Heart right ventricle (tissue), 16 donors: ENCODE measurements at regions of chr9 and their contacts with region 1.

Region 1: DNA sequence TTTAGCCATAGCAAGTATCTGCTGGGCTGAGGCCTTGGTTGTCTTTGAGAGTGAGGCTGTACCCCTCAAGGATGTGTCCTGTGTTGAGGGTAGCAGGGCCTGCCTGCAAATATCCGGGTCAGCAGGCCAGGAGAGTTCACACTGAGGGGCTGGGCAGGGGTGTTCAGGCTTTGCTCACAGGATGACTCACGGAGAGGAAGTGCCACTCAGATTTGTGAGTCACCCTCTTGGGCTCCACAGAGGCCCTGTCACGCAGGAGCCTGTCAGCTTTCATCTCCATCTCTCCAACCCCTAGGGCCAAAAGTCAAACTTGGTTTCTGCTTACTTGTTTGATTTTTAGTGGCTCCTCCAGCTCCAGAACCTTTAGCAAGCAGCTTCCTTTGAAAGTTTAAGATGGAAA is 211.5 kb downstream of the SEC61B start:
- DNase-seq: peak in 1 of 2 donors; percentile 14
- ATAC-seq: peak in 7 of 8 donors; percentile 43 to 97 (median 53)
- H3K4me3 ChIP-seq: no peak overlapping the region
- H3K27ac ChIP-seq: peak overlapping the region in 1 of 10 donors; percentile 39
- H3K4me1 ChIP-seq: peaks cover 0 to 16% (median 7%) of the 10 kb centered on the region in 9 donors
- H3K27me3 ChIP-seq: no peaks in the 10 kb centered on the region
- CTCF ChIP-seq: no peak

Region 2: GRCh38 chr9:98642661-98643312 is 790.8 kb before region 1 on chr9:
- intact Hi-C with region 1: no loop called
- DNase-seq: no peak
- ATAC-seq: no peak
- H3K4me3 ChIP-seq: no peak overlapping the region
- H3K27ac ChIP-seq: no peak overlapping the region
- H3K4me1 ChIP-seq: no peaks in the 10 kb centered on the region
- H3K27me3 ChIP-seq: peaks cover 0 to 22% (median 7%) of the 10 kb centered on the region in 7 donors
- CTCF ChIP-seq: no peak

Region 3: GRCh38 chr9:99253772-99254431 is 179.7 kb before region 1 on chr9:
- intact Hi-C with region 1: no loop called
- DNase-seq: no peak
- ATAC-seq: no peak
- H3K4me3 ChIP-seq: no peak overlapping the region
- H3K27ac ChIP-seq: peak overlapping the region in 1 of 10 donors; percentile 14
- H3K4me1 ChIP-seq: peaks cover 0 to 23% (median 7%) of the 10 kb centered on the region in 9 donors
- H3K27me3 ChIP-seq: no peaks in the 10 kb centered on the region
- CTCF ChIP-seq: no peak

Region 4: GRCh38 chr9:99377790-99378775 is 55.5 kb before region 1 on chr9:
- intact Hi-C with region 1: loop called in 1 of 10 experiments (anchors 10 kb)
- DNase-seq: no peak
- ATAC-seq: no peak
- H3K4me3 ChIP-seq: no peak overlapping the region
- H3K27ac ChIP-seq: no peak overlapping the region
- H3K4me1 ChIP-seq: no peaks in the 10 kb centered on the region
- H3K27me3 ChIP-seq: peaks cover 0 to 2% (median 0%) of the 10 kb centered on the region in 7 donors
- CTCF ChIP-seq: no peak

Region 5: DNA sequence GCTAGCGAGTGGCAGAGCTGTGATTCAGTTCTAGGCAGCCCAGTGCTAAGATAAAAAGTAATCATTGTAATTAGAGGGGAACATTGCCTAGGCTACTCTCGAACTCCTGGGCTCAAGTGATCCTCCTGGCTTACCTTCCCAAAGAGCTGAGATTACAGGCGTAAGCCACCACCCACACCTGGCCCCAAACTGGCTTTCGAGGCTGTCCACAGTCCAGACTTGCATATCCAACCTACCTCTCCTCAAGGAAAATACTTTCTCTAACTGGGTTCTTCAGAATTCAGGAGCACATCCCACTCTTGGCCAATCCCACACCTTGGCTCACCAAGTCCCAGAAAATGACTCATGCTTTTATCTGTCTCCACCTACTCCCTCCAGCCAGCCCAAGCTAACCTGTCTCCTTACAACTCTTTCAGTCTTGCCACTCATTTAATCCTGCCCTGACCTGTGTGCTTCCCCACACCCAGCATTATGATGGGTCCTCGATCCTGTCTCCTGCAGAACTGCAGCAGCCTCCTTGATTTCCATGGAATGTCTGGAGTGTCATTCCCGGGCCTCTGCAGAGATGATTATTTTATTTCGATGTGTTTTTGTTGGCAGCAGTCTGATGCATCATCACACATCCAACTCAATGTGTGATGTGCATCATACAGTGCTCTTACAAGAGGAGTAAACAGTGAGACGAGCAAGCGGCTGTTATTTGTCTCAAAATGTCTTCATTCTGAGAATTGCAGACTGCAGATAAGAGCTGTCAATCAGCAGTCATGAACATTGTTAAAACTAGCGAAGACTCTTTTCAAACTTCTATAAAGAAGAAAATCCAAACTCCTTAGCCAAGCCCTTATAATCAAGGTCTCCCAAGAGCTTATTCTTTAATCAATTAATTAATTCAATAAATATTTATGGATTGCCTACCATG is 44.2 kb before region 1 on chr9:
- intact Hi-C with region 1: no loop called
- DNase-seq: no peak
- ATAC-seq: no peak
- H3K4me3 ChIP-seq: no peak overlapping the region
- H3K27ac ChIP-seq: no peak overlapping the region
- H3K4me1 ChIP-seq: peaks cover 0 to 18% (median 5%) of the 10 kb centered on the region in 9 donors
- H3K27me3 ChIP-seq: no peaks in the 10 kb centered on the region
- CTCF ChIP-seq: no peak

Region 6: DNA sequence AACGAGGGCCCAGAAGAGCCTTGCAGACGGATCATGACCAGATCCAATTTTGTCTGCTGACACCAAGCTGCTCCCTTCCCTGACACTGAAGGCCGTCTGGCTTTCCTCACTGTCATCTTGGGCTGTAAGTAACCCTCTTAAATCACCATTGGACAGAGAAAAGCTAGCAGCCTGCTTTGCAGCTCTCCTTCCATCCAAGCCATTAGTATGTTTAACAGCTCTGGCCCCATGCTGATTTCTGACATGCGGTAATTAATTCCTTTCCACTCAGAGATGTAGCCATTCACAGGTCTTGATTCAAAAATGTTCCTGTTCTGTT is 21.8 kb before region 1 on chr9:
- intact Hi-C with region 1: loop called in 1 of 10 experiments (anchors 2 kb)
- DNase-seq: peak; percentile 20 to 24
- ATAC-seq: peak in 6 of 8 donors; percentile 37 to 74 (median 47)
- H3K4me3 ChIP-seq: no peak overlapping the region
- H3K27ac ChIP-seq: no peak overlapping the region
- H3K4me1 ChIP-seq: peaks cover 0 to 8% (median 3%) of the 10 kb centered on the region in 9 donors
- H3K27me3 ChIP-seq: no peaks in the 10 kb centered on the region
- CTCF ChIP-seq: no peak